Cardiac septum (tissue), 1 donor: ENCODE measurements at regions of chr4 and their contacts with region 1.

Region 1: DNA sequence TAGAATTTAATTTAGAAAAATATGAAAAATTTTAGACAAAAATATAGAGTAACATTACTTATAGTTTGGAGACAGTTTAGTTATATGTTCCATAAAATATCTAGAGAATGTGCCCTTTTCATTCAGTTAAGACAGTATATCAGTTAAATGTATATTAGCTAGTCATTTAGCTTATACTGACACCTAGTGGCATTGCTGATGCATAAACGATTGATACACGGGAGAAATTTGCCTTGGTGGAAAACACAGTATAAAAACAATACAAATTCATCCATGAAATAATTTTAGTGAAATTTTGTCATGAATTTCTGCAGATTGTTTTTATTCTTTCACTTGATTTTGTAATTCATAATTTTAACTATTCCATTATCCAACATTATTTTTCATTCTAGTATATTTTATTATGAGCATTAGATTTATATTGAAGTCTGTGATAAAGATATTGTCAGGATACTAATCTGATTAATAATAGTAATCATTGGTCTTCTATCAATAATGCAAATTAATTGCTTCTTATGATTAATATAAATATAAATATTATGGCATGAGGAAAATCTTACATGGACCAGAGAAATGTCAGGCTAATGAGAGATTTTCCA is 219.0 kb downstream of the TLL1 start:
- DNase-seq: no peak

Region 2: DNA sequence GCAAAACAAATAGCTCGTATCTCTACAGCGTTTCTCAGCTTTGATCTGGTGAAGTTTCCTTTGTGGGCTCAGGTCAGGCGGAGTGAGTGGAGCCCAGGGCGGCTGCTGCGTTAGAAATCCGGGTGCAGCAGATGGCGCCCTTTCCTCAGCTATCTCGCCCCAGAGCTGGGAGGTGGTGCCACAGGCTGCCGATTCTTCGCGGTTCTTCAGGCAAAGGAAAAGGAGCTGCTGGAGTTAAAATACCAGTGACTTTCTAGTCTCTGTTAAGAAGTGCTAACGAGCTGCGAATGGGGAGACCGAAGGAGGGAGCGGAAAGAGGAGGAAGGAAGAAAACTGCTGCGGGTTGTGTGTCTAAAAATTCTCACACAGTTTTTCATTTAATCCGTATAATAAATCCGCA is 598.7 kb before region 1 on chr4:
- intact Hi-C with region 1: loop called (anchors 5 kb)
- DNase-seq: peak; percentile 86

Region 3: DNA sequence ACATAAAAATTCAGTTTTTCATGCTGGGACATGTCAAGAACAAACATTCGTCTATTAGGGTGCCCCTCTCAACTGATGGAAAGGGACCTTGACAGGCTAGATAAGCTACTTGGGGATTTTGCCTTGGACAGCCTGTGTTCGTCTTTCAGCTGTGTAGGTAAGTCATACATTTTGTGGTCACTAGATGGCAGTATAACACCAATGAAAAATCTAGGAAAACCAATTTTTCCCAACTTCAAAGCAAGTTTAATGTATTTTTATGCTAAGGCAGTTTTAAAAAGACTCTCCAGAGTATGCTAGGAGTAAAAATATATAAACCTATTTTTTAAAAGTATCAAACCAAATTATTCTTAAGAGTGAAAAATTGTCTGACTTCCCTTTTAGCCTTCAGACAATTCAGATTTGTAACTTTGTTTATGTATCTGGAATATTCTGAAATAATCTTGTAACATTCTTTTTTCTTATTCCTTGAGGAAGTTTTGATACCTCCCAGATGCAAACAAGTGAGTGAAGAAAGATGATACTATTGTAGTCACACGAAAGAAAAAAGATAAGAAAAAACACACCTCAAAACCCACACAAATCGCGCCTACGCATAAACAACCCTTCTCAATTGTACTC is 554.9 kb before region 1 on chr4:
- intact Hi-C with region 1: loop called (anchors 2 kb)
- DNase-seq: no peak